ENCODE measurements at regions of chr14 and their contacts with region 1.

Region 1: DNA sequence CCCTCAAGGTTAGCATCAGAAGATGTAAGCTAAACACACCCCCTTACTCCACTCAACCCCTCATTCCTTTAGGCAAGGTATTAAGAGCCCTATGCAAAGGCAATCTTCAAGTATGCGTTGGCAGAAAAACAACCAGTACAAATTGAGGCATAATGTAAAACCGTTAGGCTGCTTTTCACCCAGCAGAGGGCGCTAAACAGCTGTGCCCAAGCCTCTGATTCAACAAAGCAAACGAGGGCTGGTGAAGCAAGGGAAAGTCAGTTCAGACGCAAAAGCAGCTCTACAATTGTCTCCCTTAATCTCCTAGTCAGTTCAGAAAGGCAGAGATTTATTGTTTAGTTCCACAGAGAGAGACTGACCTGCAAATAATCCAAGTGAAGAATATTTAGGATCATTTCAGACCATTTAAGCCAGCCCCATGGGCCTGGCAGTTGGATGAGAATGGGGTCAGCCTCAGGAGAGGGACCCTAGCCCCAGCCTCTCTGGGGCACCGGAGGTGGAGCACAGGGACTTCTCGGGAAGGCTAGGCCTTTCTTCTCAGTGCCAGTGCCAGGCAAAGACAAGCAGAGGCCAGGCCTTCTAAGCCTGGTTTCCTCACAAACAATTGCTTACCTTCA is 23.5 kb downstream of the DCAF5 start:
- DNase-seq: peak; percentile 55
- H3K4me3 ChIP-seq: peak overlapping the region in 1 of 2 experiments; percentile 8; a peak in 1 of 4 replicates
- H3K27ac ChIP-seq: peak overlapping the region; percentile 46 to 64
- H3K4me1 ChIP-seq: peaks cover 24 to 28% of the 10 kb centered on the region in 2 experiments
- H3K27me3 ChIP-seq: no peaks in the 10 kb centered on the region
- CTCF ChIP-seq: peak; percentile 97
- EP300 ChIP-seq: no peak
- RAD21 ChIP-seq: peak; percentile 93

Region 2: GRCh38 chr14:69087061-69087461 is 42.3 kb before region 1 on chr14:
- CTCF ChIA-PET with region 1: no interaction called
- POLR2A ChIA-PET with region 1: no interaction called
- DNase-seq: no peak
- H3K4me3 ChIP-seq: no peak overlapping the region
- H3K27ac ChIP-seq: peak overlapping the region in 1 of 2 experiments; percentile 90; a peak in 1 of 4 replicates
- H3K4me1 ChIP-seq: peaks cover 10 to 11% of the 10 kb centered on the region in 2 experiments; a peak in 2 of 4 replicates
- H3K27me3 ChIP-seq: no peaks in the 10 kb centered on the region
- CTCF ChIP-seq: no peak
- EP300 ChIP-seq: no peak
- RAD21 ChIP-seq: no peak

Region 3: DNA sequence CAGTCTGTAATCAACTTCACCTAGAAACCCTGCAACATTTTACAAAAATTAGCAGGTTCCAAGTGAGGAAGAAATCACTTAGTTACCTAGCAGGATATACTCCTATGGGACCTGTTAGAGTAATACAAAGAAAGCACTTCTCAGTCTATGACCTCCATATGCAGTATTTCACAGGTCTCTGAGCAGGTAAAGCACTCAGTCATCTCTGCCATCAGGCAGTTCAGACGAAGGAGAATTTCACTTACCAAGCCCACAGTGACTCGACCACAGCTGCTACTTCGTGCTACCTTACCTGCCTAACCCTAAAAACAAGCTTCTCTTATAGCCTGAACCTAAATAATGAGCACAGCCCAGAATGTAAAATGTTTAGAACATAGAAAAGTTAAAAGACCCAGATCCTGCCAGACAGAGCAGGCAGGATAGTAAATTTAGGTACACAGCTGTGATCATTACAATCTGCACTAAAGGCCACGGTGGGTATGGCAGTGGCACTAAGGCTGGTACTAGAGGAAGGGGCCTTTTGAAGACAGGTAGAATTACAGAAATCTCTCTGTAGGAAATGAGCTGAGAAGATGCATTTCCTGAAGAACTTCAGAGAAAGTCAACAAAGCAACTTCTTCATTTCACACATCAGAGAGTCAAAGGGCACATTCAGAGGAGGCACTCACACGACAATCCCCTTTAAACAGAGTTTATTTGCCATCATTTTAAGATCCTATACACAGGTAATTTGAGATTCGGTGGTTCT is 12.2 kb before region 1 on chr14:
- CTCF ChIA-PET with region 1: interaction called, 28 read pairs
- POLR2A ChIA-PET with region 1: no interaction called
- DNase-seq: no peak
- H3K4me3 ChIP-seq: no peak overlapping the region
- H3K27ac ChIP-seq: no peak overlapping the region
- H3K4me1 ChIP-seq: no peaks in the 10 kb centered on the region
- H3K27me3 ChIP-seq: no peaks in the 10 kb centered on the region
- CTCF ChIP-seq: no peak
- EP300 ChIP-seq: no peak
- RAD21 ChIP-seq: no peak

Region 4: GRCh38 chr14:69153131-69153872 is 23.9 kb after region 1 on chr14:
- CTCF ChIA-PET with region 1: interaction called, 66 read pairs
- POLR2A ChIA-PET with region 1: interaction called, 3 read pairs
- DNase-seq: peak; percentile 96
- H3K4me3 ChIP-seq: peak overlapping the region; percentile 88 to 91
- H3K27ac ChIP-seq: peak overlapping the region; percentile 86
- H3K4me1 ChIP-seq: peaks cover 18 to 19% of the 10 kb centered on the region in 2 experiments; a peak in 3 of 4 replicates
- H3K27me3 ChIP-seq: no peaks in the 10 kb centered on the region
- CTCF ChIP-seq: no peak
- EP300 ChIP-seq: no peak
- RAD21 ChIP-seq: no peak